ENCODE measurements at regions of chr2 and their contacts with region 1.

Region 1: GRCh38 chr2:84881581-84882414 is 914 bp upstream of the TRABD2A start:
- DNase-seq: peak; percentile 88
- H3K4me3 Mint-ChIP-seq: peak overlapping the region; percentile 88
- H3K27ac Mint-ChIP-seq: peak overlapping the region; percentile 52
- H3K4me1 Mint-ChIP-seq: peaks cover 17% of the 10 kb centered on the region
- H3K27me3 Mint-ChIP-seq: no peaks in the 10 kb centered on the region
- CTCF ChIP-seq: peak; percentile 47

Region 2: DNA sequence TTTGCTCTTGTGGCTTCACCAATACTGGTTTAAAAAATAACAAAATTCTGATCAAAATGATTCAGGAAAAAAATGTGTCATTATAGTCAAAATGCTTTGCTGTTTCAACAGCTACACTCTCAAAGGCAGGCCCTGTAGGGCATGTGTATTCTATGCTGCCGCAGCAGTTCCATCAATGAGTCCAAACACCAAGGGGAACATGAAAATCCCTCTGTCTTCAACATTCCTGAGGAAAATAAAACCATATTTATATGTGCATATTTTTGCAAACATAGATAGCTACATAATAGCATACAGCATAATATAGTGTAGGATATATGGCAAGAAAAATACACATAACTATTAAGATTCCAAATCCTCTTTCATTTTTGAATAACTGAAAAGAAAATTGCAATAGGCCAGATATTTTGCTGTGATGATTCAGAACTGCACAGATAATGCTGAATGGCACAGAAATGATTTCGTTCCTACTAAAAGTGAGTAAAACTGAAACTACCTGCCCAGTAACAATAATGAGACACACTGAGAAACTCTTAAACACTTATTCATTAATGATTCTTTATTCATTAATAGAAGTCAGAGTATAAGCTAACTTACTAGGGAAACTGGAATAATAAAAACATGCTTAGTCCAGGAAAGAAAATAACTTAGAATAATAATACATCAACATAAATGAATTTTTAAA is 766.5 kb before region 1 on chr2:
- CTCF ChIA-PET with region 1: no interaction called
- POLR2A ChIA-PET with region 1: no interaction called
- intact Hi-C with region 1: no loop called
- DNase-seq: no peak
- H3K4me3 Mint-ChIP-seq: no peak overlapping the region
- H3K27ac Mint-ChIP-seq: no peak overlapping the region
- H3K4me1 Mint-ChIP-seq: peaks cover 6% of the 10 kb centered on the region
- H3K27me3 Mint-ChIP-seq: no peaks in the 10 kb centered on the region
- CTCF ChIP-seq: no peak

Region 3: DNA sequence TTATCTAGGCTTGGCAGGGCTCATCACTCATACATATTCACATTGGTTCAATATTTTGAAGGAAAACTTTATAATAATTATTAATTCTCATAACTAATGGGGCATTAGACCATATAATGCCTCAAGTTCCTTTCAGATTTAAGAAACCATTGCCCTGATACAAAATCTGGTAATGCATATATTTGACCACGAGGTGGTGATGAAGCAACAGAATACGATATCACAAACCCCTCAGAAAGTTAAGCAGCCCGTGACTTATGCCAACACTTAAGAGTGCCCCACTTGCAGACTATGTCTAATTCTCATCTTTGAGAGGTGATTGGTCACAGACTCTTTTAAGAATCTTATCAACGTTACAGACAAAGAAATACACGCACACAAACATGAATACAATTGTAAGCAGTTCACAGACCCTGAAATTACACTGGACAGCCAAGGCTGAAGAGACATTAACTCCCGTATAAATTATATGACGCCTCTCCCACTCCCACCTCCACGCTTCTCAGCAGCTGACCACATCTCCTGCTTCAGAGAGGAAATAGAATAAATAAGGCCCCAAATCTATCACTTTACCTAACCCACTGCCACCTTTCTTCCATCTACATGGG is 386.2 kb before region 1 on chr2:
- CTCF ChIA-PET with region 1: no interaction called
- POLR2A ChIA-PET with region 1: interaction called, 4 read pairs
- intact Hi-C with region 1: loop called (anchors 1 kb)
- DNase-seq: peak; percentile 72
- H3K4me3 Mint-ChIP-seq: no peak overlapping the region
- H3K27ac Mint-ChIP-seq: peak overlapping the region; percentile 35
- H3K4me1 Mint-ChIP-seq: peaks cover 21% of the 10 kb centered on the region
- H3K27me3 Mint-ChIP-seq: no peaks in the 10 kb centered on the region
- CTCF ChIP-seq: peak; percentile 53

Region 4: DNA sequence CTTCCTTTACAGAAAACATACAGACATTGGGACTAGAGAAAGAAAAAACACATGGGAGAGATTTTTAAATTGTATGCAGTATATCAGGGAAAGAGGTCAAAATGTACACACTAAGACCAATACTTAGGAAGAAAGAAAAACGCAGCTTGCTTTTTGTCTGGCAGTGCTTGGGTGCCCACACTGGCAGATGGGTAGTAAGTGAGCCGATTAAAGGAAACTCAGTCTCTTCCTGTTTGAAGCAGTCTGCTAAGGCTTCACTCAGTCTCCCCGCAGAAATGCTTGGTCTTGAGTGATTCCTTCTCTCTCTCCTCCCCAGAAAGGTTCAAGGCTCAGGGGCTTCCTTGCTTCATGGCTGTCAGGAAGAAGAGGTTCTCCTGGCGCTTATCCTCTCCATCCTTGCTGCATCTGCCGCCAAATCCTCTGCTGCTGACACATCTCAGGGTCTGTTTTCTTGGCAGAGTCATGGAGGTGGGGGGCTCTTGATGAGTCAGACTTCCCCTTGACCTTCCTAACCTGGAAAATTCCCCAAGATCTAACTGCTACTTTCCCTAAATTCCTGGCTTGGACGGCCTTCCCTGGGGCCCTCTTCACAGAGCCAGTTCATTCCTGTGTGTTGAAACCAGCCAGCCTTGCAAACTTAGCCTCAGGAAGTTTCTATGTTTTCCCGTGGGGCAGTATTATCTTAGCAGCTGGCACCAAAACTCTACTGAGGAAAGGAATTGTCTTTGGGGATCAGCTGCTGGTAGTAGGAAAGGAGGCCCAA is 13.1 kb after region 1 on chr2:
- CTCF ChIA-PET with region 1: interaction called, 12 read pairs
- POLR2A ChIA-PET with region 1: interaction called, 16 read pairs
- intact Hi-C with region 1: loop called (anchors 2 kb)
- DNase-seq: peak; percentile 55
- H3K4me3 Mint-ChIP-seq: no peak overlapping the region
- H3K27ac Mint-ChIP-seq: peak overlapping the region; percentile 41
- H3K4me1 Mint-ChIP-seq: peaks cover 30% of the 10 kb centered on the region
- H3K27me3 Mint-ChIP-seq: no peaks in the 10 kb centered on the region
- CTCF ChIP-seq: no peak

Measured in MCF 10A (cell line).